Activated B cell treated with CpG ODN at 0.5 μM for 24 hours (primary cell): ENCODE measurements at regions of chr1 and their contacts with region 1.

Region 1: GRCh38 chr1:202009326-202010179 is 834 bp upstream of the ELF3 start:
- DNase-seq: no peak
- ATAC-seq: peak; percentile 65
- H3K4me3 Mint-ChIP-seq: peak overlapping the region; percentile 28
- H3K27ac Mint-ChIP-seq: no peak overlapping the region
- H3K4me1 Mint-ChIP-seq: peaks cover 10% of the 10 kb centered on the region
- H3K27me3 Mint-ChIP-seq: no peaks in the 10 kb centered on the region
- CTCF ChIP-seq: peak; percentile 64

Region 2: DNA sequence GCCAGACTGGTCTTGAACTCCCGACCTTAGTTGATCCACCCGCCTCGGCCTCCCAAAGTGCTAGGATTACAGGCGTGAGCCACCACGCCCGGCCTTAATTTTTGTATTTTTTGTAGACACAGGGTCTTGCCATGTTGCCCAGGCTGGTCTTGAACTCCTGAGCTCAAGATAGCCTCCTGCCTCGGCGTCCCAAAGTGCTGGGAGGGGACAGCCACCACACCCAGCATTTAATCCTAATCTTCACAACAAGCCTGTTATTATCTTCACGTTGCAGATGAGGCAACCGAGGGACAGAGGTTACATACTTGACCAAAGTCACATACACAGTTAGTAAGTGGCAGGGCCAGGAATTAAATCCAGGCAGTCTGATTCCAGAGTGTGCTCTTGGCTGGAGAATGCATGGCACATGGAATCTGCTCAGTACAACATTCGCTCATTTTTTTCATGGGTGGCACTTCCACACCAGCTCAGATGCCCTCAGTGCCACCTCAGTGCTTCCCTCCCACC is 108.4 kb after region 1 on chr1:
- CTCF ChIA-PET with region 1: interaction called, 3 read pairs
- POLR2A ChIA-PET with region 1: no interaction called
- intact Hi-C with region 1: loop called (anchors 5 kb)
- DNase-seq: no peak
- ATAC-seq: no peak
- H3K4me3 Mint-ChIP-seq: no peak overlapping the region
- H3K27ac Mint-ChIP-seq: no peak overlapping the region
- H3K4me1 Mint-ChIP-seq: peaks cover 1% of the 10 kb centered on the region
- H3K27me3 Mint-ChIP-seq: peaks cover 9% of the 10 kb centered on the region
- CTCF ChIP-seq: no peak